ENCODE measurements at regions of chr13 and their contacts with region 1.

Region 1: GRCh38 chr13:77492982-77493381 is 42.5 kb upstream of the SCEL start:
- DNase-seq: no peak
- ATAC-seq: peak; percentile 38 to 61

Region 2: DNA sequence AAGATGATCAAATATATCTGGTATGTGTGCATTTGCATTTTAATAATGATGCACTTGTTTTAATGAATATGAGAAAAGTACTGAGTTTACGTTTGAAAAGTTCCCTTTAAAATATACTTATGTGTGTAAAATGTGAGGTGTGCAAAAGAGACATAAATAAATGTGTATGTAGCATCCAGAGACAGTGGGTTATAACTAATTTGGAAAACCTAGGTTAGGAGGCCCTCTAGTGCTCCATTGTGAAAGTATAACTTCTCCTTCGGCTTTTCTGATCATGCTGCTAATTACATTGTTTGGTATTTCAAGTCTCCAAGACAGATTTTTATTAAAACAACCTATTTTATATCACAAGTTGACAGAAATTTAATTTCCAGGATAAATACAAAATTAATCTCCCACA is 72.7 kb after region 1 on chr13:
- intact Hi-C with region 1: loop called in 1 of 2 experiments (anchors 10 kb)
- DNase-seq: no peak
- ATAC-seq: peak in 1 of 2 donors; percentile 17

Region 3: DNA sequence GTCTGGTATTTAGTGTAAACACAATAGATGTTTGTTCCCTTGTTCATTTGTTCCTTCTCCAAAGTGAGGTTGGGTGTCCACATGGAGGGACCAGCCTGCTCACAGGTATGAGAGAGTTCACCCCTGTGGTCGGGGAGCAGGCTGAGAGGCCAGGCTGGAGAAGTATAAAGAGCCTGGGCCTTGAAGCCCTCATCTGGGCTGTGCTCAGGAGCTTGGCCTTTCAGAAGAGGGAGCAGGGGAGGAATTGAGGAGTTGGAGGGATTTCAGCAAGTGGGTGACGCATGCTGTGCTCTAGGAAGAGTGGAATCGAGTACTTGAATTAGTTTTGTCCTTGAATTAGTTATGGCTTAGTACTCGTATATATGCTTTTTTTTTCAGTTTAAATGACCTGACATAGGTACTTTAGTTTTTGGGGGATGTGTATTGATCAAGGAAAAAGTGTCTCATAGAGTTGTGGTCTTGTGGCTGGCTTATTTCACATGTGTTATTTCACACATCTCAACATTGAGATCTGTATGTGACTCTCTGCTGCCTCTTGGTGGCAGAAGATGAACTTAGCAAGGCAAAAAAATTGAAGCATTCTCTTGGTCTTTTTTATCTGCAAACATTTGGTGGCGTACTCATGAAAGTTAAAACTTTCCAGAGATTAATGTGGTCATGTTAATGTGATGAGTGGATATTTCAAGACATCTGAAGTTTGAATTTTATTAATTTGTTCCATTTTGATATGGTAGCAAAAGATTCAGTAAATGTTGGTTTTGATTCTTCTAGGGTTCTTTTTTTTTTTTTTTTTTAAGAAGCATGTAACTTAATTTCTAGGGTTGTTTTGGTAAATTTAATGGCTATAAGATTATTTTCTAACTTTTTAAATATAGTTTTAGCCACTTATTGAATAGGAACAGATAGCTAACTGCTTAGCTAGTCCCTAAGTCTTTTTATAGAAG is 258.8 kb after region 1 on chr13:
- intact Hi-C with region 1: loop called in 1 of 2 experiments (anchors 5 kb)
- DNase-seq: no peak
- ATAC-seq: peak; percentile 68 to 72

Measured in left cardiac atrium (tissue), 4 donors.